ENCODE measurements at regions of chr9 and their contacts with region 1.

Region 1: DNA sequence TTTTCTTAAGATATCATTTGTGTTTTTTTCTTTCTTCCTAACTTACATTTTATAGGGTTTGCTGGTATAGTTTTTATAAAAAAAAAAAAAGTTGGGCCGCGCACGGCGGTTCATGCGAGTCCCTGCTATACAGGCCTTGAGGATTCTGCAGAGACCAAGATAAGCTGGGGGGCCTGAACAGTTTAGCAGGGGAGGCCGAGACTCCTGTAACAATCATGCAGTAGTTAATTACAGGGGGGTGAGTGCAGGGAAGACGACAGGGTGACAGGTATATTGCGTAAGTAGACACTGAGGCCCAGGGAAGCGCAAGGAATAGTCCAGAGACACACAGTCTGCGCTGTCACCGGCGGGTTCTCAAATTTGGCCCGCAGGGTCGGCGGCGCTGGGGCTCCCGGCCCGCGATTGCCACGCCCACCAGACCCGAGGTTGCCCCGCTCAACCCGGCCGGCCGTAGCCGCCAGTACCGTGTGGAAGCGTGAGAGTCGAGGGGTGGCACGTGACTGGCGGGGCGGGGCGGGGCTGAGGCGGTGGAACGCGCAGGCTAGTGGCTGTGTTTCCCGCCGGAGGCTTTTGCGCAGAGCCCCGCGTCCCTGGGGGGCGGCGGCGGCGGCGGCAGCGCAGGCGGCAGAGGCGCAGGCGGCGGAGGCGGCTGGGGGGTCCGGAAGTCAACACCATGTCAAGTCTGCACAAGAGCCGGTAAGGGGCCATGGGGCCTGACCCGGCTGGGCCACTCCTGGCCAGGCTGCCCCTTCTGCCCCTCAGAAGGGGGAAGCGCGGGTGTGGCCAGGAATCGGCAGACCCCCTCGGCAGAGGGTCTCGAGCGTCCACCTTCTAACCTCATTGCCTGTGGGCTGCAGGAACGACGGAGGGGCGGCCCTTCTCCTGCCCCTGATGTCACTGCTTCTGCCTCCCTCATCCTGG is at the start of gene TBC1D13:
- DNase-seq: peak; percentile 96
- ATAC-seq: peak; percentile 95
- H3K4me3 Mint-ChIP-seq: peak within 1 kb of the TSS; percentile 95
- H3K27ac Mint-ChIP-seq: peak within 1 kb of the TSS; percentile 85
- H3K4me1 Mint-ChIP-seq: peaks cover 17% of the 10 kb centered on the region
- H3K27me3 Mint-ChIP-seq: no peaks in the 10 kb centered on the region
- CTCF ChIP-seq: no peak
- total RNA-seq, gene TBC1D13: 21.5 and 26.4 TPM in 2 replicates

Region 2: DNA sequence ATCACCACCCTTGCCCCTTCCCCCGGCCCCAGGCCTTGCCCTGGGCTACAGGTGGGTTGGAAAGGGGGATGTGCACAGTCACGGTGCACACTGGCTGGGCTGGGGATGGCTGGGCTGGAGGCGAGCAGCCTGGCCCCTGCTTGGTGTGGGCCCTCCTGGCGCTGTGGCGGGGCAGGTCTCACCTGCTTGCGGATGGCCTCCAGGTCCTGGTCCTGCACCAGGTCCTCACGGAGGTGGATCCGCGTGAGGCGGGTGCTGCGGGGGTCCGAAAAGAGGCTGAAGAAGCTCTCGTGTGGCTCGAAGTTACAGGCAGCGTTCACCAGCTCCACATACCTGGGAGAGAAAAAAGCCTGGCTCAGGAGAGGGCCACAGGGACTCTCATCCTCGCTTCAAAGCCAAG is 33.3 kb before region 1 on chr9:
- CTCF ChIA-PET with region 1: no interaction called
- POLR2A ChIA-PET with region 1: no interaction called
- intact Hi-C with region 1: no loop called
- DNase-seq: no peak
- ATAC-seq: no peak
- H3K4me3 Mint-ChIP-seq: no peak overlapping the region
- H3K27ac Mint-ChIP-seq: no peak overlapping the region
- H3K4me1 Mint-ChIP-seq: no peaks in the 10 kb centered on the region
- H3K27me3 Mint-ChIP-seq: no peaks in the 10 kb centered on the region
- CTCF ChIP-seq: no peak

Region 3: DNA sequence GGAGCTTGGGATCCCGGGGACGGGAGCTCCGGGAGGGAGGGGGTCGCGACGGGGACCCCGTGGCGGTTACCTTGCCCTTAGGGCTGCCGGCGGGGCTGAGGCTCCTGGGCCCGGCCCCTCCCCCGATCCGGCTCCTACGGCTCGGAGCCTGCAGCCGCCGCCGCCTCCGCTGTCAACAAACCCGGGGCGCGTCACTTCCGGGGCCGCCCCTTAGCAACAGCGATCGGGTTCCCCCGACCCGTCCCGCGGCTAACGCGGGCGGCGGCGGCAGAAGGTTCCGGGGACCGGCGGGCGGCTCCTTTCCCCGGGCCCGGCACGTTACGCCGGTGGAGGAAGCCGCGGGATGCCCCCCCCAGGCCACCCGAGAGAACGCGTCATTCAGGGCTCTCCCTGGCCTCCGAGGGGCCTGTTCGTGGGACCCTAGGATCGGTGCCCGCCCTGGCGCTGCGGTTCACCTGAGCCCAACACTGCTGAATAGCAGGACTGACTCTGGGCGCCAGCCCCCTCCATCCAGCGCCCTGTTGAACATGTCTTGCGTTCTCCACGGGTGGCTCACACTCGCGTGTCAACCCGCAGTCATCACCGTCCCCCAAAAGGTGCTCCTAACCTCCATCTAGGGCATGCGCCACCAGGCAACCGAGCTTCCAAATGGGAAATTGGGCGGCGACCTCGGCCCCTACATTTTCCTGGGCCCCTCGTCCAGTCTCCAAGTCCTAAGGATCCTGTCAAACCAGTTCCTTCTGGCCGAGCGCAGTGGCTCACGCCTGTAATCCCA is 15.0 kb before region 1 on chr9 and contains the start of gene ZER1:
- CTCF ChIA-PET with region 1: no interaction called
- POLR2A ChIA-PET with region 1: interaction called, 7 read pairs
- intact Hi-C with region 1: loop called (anchors 1 kb)
- DNase-seq: peak; percentile 96
- ATAC-seq: peak; percentile 93
- H3K4me3 Mint-ChIP-seq: peak within 1 kb of the TSS; percentile 92
- H3K27ac Mint-ChIP-seq: peak within 1 kb of the TSS; percentile 89
- H3K4me1 Mint-ChIP-seq: peaks cover 24% of the 10 kb centered on the region
- H3K27me3 Mint-ChIP-seq: no peaks in the 10 kb centered on the region
- CTCF ChIP-seq: no peak
- total RNA-seq, gene ZER1: 24.0 and 26.0 TPM in 2 replicates

Region 4: DNA sequence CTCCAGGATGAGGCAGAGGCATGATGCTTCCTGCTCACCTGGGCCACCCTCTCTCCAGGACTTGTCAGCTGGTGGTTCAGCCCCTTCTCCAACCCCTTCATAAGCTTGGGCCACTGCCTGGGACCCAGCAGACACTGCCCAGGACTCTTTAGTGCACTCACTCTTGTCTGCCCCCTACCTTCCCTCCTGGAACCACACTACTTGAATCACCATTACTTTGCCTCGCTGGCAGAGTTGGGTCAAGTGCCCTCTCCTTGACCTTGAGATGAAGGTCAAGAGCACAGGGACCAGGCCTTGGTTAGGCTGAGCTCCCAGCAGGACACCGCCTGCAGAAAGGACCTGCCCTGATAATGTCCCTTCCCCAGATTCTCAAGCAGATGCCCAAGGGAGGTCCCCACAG is 22.9 kb after region 1 on chr9:
- CTCF ChIA-PET with region 1: no interaction called
- POLR2A ChIA-PET with region 1: no interaction called
- intact Hi-C with region 1: no loop called
- DNase-seq: no peak
- ATAC-seq: no peak
- H3K4me3 Mint-ChIP-seq: no peak overlapping the region
- H3K27ac Mint-ChIP-seq: no peak overlapping the region
- H3K4me1 Mint-ChIP-seq: no peaks in the 10 kb centered on the region
- H3K27me3 Mint-ChIP-seq: no peaks in the 10 kb centered on the region
- CTCF ChIP-seq: no peak

Measured in activated B cell treated with CpG ODN at 0.5 μM for 24 hours (primary cell).